ENCODE measurements at regions of chr1 and their contacts with region 1.

Region 1: DNA sequence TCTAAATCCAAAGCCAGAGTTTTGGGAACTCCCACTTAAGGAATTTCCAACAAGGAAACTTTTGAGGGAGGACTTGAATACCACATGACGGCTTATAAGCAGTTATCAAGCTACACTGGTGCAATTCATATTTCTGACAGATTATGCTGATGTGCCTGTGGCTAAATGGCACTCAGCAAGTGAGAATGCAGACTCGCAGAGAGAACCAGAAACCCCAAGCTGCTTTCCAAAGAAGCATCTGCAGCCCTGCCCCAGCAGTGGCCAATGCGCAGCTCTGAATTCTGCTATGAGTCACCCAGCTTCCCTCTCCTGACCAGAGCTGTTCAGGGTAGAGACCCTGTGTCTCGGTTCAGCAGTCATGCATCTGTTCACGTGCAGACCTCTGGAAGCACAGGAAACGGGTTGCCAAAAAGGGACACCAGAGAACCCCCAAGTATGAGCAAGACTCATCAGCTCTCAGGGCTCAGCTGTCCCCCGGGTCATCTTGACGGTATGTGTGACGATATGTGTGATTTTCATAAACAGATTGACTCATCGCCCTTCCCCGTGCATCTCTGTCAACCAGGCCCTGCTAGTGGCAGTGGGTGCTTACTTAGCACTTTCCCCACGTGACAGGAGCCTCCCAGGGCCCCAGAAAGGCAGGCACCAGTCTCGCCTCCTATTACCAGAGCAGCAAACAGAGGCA is 76.3 kb downstream of the ITPKB start:
- DNase-seq: peak; percentile 72 to 83 (median 74)
- ATAC-seq: peak; percentile 72
- H3K4me3 ChIP-seq: no peak overlapping the region
- H3K27ac ChIP-seq: peak overlapping the region; percentile 89
- H3K4me1 ChIP-seq: peaks cover 74% of the 10 kb centered on the region
- H3K27me3 ChIP-seq: no peaks in the 10 kb centered on the region

Region 2: DNA sequence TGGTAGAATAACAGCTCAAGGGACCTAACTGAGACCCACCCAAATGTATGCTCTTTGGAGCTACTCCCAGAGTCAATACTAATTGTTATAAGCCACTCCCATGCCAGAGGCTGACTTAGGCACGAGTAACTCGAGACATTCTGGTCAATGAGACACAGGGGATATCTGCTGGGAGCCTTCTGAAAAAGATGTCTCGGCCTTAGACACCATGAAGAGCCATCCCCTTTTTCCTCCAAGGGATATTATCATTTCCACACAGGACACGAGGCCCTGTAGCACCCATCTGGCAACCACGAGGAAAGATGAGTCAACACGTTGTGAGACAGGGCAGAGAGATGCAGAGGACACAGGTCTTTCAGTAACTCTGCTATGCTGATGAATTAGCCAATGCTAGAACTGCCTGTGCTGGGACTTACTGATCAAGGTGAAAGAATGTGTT is 45.6 kb after region 1 on chr1:
- intact Hi-C with region 1: loop called in 1 of 4 experiments (anchors 5 kb)
- DNase-seq: no peak
- ATAC-seq: no peak
- H3K4me3 ChIP-seq: no peak overlapping the region
- H3K27ac ChIP-seq: peak overlapping the region; percentile 31
- H3K4me1 ChIP-seq: peaks cover 23% of the 10 kb centered on the region
- H3K27me3 ChIP-seq: no peaks in the 10 kb centered on the region

Measured in right cardiac atrium (tissue), 5 donors.